Activated CD8-positive, alpha-beta T cell treated with anti-CD3 and anti-CD28 coated beads for 36 hours (primary cell): ENCODE measurements at regions of chr9 and their contacts with region 1.

Region 1: GRCh38 chr9:126704873-126705766 is 91.4 kb downstream of the LMX1B start:
- DNase-seq: peak; percentile 93
- ATAC-seq: peak; percentile 85
- H3K4me3 Mint-ChIP-seq: no peak overlapping the region
- H3K27ac Mint-ChIP-seq: no peak overlapping the region
- H3K4me1 Mint-ChIP-seq: peaks cover 14% of the 10 kb centered on the region
- H3K27me3 Mint-ChIP-seq: peaks cover 17% of the 10 kb centered on the region
- CTCF ChIP-seq: peak; percentile 88

Region 2: DNA sequence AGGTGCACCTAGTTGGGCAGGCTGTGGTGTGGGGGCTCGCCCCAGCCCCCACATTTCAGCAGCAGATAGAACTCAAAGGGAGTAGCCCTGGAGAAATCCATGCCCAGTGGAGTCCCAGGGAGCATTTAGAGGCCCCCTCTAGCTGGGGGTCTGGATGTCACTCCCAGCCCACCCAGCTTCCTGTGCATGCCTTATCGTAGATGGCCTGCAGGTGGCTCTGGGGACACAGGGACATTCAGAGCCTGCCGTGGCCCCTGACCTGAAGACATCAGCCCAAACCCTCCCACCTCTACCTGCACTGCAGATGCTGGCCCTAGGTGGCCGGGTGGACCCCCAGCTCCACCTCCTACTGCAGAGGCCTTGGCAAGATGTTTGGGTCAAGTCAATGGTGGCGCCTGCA is 140.4 kb before region 1 on chr9:
- CTCF ChIA-PET with region 1: no interaction called
- POLR2A ChIA-PET with region 1: no interaction called
- intact Hi-C with region 1: no loop called
- DNase-seq: peak; percentile 5
- ATAC-seq: no peak
- H3K4me3 Mint-ChIP-seq: no peak overlapping the region
- H3K27ac Mint-ChIP-seq: no peak overlapping the region
- H3K4me1 Mint-ChIP-seq: no peaks in the 10 kb centered on the region
- H3K27me3 Mint-ChIP-seq: peaks cover 32% of the 10 kb centered on the region
- CTCF ChIP-seq: no peak

Region 3: DNA sequence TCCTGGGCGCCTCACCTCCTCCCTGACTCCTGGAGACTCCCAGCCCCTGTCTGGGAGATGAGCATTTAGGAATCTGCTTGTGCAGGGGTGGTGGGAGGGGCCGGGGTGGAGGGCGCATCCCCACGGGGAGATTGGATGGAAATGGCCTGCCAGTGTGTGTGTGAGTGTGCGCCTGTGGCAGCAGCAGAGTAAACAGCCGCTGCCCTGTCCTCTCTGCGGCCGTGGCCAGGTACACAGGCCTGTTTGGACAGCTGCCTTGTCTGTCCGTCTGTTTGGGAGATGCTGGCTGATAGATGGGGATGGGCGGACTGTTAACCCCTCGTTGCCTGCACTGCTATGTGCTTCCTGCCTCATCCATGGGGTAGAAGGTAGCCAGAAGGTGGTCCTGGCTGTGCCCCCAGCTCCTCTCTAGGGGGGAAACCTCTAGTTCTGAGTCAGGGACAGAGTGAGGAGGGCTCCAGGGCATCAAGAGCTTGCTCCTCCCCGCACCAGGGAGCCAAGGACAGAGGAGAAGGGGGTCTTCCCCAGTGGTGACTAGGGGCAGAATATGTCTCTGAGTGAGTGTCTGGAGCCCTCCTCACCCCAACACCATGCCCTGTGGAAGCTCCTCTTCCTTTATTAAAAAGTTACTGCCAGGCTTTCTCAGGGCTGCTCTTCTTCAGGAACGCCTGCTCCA is 31.3 kb before region 1 on chr9:
- CTCF ChIA-PET with region 1: interaction called, 13 read pairs
- POLR2A ChIA-PET with region 1: no interaction called
- intact Hi-C with region 1: no loop called
- DNase-seq: no peak
- ATAC-seq: no peak
- H3K4me3 Mint-ChIP-seq: no peak overlapping the region
- H3K27ac Mint-ChIP-seq: no peak overlapping the region
- H3K4me1 Mint-ChIP-seq: peaks cover 6% of the 10 kb centered on the region
- H3K27me3 Mint-ChIP-seq: peaks cover 48% of the 10 kb centered on the region
- CTCF ChIP-seq: no peak

Region 4: DNA sequence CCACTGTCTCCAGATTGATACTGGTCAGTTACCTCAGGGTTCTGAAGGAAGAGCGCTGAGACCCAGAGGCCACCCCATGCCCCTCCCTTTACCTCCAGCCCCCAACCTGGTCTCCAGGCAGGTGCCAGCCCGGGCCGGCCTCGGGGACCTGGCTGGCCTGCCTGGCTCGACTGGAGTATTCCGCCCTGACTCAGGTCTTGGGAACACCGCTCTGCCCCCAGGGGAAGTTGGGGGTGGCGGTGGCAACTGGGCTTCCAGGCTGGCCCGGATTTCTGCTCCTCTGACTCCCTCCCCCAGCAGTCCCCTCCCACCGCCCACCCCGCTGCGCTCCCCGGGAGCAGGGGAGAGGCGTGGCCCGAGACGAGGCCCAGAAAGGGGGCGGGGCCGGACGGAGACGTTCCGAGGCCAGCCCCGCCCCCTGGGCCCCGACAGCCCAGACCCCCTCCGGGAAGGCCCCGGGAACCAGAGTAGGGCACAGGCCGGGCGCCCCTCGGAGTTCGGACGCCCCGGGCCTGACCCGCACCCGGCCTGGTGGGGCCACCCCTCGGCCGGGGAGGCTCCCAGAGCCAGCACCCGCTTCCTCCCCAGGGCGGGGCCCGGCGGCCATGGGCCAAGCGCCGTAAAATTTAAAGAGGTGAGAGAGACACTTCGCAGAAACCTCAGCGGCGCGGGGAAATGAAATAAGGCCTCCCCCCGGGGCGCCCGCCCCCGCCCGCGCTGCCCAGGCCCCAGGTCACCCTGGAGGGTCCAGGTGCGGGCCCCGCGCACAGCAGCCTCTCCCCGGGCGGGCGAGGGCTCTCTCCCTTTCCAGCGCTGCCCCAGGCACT is 17.3 kb after region 1 on chr9:
- CTCF ChIA-PET with region 1: interaction called, 79 read pairs
- POLR2A ChIA-PET with region 1: interaction called, 3 read pairs
- intact Hi-C with region 1: no loop called
- DNase-seq: peak; percentile 92
- ATAC-seq: peak; percentile 78
- H3K4me3 Mint-ChIP-seq: peak overlapping the region; percentile 79
- H3K27ac Mint-ChIP-seq: peak overlapping the region; percentile 88
- H3K4me1 Mint-ChIP-seq: peaks cover 43% of the 10 kb centered on the region
- H3K27me3 Mint-ChIP-seq: no peaks in the 10 kb centered on the region
- CTCF ChIP-seq: no peak

Region 5: DNA sequence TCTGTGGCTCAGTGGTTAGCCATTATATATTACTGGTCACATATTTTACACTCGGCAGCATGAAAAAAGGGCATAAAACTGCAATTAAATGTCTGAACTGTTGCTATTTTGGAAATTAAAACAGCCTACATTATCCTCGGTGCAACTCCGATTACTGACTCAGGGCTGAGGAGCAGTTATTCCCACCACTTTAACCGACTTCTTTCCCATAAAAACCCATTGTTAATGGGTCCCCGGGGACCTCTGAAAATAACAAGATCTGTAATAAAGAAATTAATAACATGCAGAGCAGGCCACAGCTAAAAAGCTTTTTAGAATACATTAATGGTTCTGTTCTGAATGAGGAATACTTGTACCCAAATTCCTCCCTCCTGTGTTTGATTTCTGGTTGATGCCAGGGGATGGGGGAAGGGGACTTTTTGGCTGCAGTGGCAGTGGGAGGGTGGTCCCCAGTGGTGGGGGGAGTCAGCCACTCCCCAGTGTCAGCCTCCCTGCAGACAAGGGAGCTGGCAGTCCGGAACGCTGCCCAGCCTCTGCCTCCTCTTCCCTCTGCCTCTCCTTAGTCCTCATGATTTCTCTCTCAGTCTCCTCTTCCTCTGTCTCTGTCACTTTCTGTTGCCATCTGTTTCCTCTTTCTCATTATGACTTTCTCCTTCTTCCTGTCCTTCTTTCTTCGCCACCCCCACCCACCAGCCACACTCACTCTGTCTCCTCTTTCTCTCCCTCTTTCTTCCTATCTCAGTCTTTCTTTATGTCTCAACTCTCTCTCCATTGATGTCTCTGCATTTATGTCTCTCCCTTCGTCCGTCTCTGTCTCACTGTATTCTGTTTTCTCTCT is 40.7 kb after region 1 on chr9:
- CTCF ChIA-PET with region 1: interaction called, 67 read pairs
- POLR2A ChIA-PET with region 1: no interaction called
- intact Hi-C with region 1: no loop called
- DNase-seq: peak; percentile 56
- ATAC-seq: peak; percentile 78
- H3K4me3 Mint-ChIP-seq: no peak overlapping the region
- H3K27ac Mint-ChIP-seq: peak overlapping the region; percentile 30
- H3K4me1 Mint-ChIP-seq: peaks cover 33% of the 10 kb centered on the region
- H3K27me3 Mint-ChIP-seq: no peaks in the 10 kb centered on the region
- CTCF ChIP-seq: no peak

Region 6: GRCh38 chr9:126773004-126773607 is 68.0 kb after region 1 on chr9:
- CTCF ChIA-PET with region 1: interaction called, 456 read pairs
- POLR2A ChIA-PET with region 1: no interaction called
- intact Hi-C with region 1: no loop called
- DNase-seq: peak; percentile 41
- ATAC-seq: peak; percentile 53
- H3K4me3 Mint-ChIP-seq: no peak overlapping the region
- H3K27ac Mint-ChIP-seq: no peak overlapping the region
- H3K4me1 Mint-ChIP-seq: peaks cover 2% of the 10 kb centered on the region
- H3K27me3 Mint-ChIP-seq: peaks cover 13% of the 10 kb centered on the region
- CTCF ChIP-seq: peak; percentile 31

Region 7: DNA sequence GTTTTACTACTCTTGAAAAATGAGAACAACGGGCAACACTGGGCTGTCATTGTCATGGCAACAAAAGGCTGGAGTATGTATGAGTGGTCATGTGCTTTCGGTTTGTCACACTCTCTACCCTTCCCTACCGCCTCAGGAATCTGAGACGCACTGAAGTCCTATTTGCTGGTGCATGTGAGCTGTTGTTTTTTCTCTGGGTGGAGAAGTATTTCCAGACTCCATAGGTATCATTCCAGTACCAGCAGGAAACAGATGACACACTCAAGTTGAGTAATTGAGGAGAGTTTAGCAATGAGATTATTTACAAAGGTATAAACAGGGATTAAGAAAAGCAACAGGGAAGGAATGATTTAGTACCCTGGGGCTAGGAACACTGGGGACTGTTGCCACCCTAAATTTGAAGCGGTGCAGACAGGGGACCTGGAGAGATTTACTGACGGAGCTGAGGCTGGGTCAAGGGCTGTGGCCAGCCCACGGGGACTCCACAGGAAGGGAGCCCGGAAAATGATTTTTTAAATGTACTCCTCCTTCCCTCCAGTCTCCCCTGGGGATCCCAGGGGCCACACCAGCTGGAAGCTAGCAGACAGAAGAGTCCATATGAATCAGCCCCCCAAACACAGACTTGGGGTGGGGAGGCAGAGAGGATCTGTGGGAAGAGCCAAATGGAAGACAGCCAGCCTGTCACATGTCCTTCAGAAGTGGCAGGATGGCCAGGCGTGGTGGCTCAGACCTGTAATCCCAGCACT is 86.5 kb after region 1 on chr9:
- CTCF ChIA-PET with region 1: interaction called, 456 read pairs
- POLR2A ChIA-PET with region 1: interaction called, 3 read pairs
- intact Hi-C with region 1: no loop called
- DNase-seq: no peak
- ATAC-seq: no peak
- H3K4me3 Mint-ChIP-seq: no peak overlapping the region
- H3K27ac Mint-ChIP-seq: no peak overlapping the region
- H3K4me1 Mint-ChIP-seq: no peaks in the 10 kb centered on the region
- H3K27me3 Mint-ChIP-seq: peaks cover 16% of the 10 kb centered on the region
- CTCF ChIP-seq: no peak